CD8-positive, alpha-beta T cell (primary cell): ENCODE measurements at regions of chr15 and their contacts with region 1.

Region 1: GRCh38 chr15:65530314-65531122 is at the start of gene HACD3:
- DNase-seq: peak; percentile 75 to 93 (median 88)
- ATAC-seq: peak; percentile 96
- H3K4me3 ChIP-seq: peak within 1 kb of the TSS; percentile 67 to 97
- H3K4me3 Mint-ChIP-seq: peak within 1 kb of the TSS; percentile 88
- H3K27ac ChIP-seq: peak within 1 kb of the TSS; percentile 68 to 76
- H3K27ac Mint-ChIP-seq: peak within 1 kb of the TSS; percentile 91
- H3K4me1 ChIP-seq: peaks cover 20% of the 10 kb centered on the region
- H3K4me1 Mint-ChIP-seq: peaks cover 39% of the 10 kb centered on the region
- H3K27me3 ChIP-seq: no peaks in the 10 kb centered on the region
- H3K27me3 Mint-ChIP-seq: no peaks in the 10 kb centered on the region
- CTCF ChIP-seq: no peak
- total RNA-seq, gene HACD3: 16.8 to 17.0 TPM

Region 2: DNA sequence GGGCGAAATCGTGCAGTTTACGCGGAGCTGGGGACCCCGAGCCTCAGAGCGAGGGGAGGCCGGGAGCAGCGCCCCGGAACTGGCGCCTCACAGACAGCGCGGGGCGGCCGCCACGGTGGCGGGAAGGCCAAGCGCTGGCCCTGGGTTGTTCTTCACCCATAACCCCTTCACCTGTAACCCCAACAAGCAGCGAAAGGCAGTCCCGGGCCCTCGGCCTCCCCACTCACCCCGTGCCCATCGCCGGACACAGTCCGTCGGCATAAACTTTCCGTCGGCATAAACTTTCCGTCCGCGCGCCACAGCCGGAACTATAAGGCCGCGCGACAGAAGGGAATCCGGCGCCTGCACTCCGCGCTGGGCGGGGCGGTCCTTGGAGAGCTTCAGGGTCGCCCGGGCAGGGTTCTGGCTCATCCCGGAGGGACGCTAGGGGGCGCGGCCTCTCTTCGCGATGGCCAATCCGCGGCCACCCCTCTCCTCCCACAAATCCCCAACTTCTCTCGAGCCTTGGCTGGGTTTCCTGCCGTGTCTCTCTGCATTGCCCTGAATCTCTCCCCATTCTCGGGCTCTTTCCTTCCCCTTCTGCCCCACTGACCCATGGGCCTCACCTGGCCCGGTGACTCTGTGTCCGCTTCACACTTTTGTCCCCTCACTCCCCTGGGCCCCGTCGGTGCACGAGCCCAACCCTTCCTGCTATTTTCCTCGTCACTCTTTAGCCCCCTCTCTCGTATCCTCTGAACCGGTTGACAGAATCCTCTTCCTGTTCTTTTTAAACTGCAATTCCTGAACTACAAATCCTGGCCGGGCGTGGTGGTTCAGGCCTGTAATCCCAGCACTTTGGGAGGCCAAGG is 80.6 kb after region 1 on chr15 and contains the start of gene INTS14:
- CTCF ChIA-PET with region 1: interaction called, 3 read pairs
- POLR2A ChIA-PET with region 1: interaction called, 3 read pairs
- intact Hi-C with region 1: loop called (anchors 5 kb)
- DNase-seq: peak; percentile 81 to 95 (median 92)
- ATAC-seq: peak; percentile 95
- H3K4me3 ChIP-seq: peak within 1 kb of the TSS; percentile 85 to 96
- H3K4me3 Mint-ChIP-seq: peak within 1 kb of the TSS; percentile 97
- H3K27ac ChIP-seq: peak within 1 kb of the TSS; percentile 80 to 95
- H3K27ac Mint-ChIP-seq: peak within 1 kb of the TSS; percentile 98
- H3K4me1 ChIP-seq: peaks cover 17% of the 10 kb centered on the region
- H3K4me1 Mint-ChIP-seq: peaks cover 43% of the 10 kb centered on the region
- H3K27me3 ChIP-seq: no peaks in the 10 kb centered on the region
- H3K27me3 Mint-ChIP-seq: no peaks in the 10 kb centered on the region
- CTCF ChIP-seq: peak; percentile 26
- total RNA-seq, gene INTS14: 26.7 to 28.6 TPM